ENCODE measurements at regions of chr9 and their contacts with region 1.

Region 1: DNA sequence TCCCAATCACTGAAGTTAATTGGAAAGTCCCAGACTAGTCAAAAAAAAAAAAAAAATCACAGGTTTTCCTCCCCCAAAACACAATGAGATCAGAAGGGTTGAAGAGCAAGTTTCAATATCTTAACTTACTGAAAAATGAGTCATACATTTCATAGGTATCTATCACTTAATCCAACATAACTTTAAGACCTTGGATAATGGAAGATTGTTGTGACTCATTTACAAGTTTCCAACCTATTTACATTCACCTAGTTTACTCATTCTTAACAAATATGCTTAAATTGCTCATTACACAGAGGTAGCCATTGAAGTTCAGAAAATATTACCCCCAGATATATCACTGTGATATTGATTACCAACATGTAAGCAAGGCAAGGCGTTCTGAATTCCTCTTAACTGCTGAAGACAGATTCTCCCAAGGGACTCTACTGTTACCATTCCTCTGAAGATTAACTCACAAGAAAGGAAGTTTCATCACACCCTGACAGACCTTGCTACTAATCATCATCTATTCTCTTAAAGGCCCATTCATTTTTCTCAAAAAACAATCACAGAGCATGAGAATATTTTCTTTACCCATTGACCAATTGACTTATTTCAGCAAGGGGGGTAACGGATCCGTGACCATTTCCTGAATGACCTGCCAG is 563.8 kb downstream of the TLE1 start:
- DNase-seq: peak; percentile 87
- ATAC-seq: peak; percentile 94
- H3K4me3 ChIP-seq: peak overlapping the region; percentile 9; the same call in 1 of the 2 replicates
- H3K27ac ChIP-seq: peak overlapping the region; percentile 90
- H3K4me1 ChIP-seq: peaks cover 24% of the 10 kb centered on the region
- H3K27me3 ChIP-seq: no peaks in the 10 kb centered on the region
- CTCF ChIP-seq: no peak

Region 2: GRCh38 chr9:80957801-80958200 is 167.8 kb before region 1 on chr9:
- CTCF ChIA-PET with region 1: no interaction called
- POLR2A ChIA-PET with region 1: no interaction called
- intact Hi-C with region 1: no loop called
- DNase-seq: no peak
- ATAC-seq: no peak
- H3K4me3 ChIP-seq: no peak overlapping the region
- H3K27ac ChIP-seq: no peak overlapping the region
- H3K4me1 ChIP-seq: no peaks in the 10 kb centered on the region
- H3K27me3 ChIP-seq: no peaks in the 10 kb centered on the region
- CTCF ChIP-seq: no peak

Region 3: GRCh38 chr9:81146656-81147337 is 21.2 kb after region 1 on chr9:
- CTCF ChIA-PET with region 1: no interaction called
- POLR2A ChIA-PET with region 1: no interaction called
- intact Hi-C with region 1: loop called (anchors 1 kb)
- DNase-seq: peak; percentile 85
- ATAC-seq: peak; percentile 88
- H3K4me3 ChIP-seq: 0 out of 2 replicates have a peak overlapping the region, but pooled peaks have one; percentile 12
- H3K27ac ChIP-seq: peak overlapping the region; percentile 82
- H3K4me1 ChIP-seq: peaks cover 40% of the 10 kb centered on the region
- H3K27me3 ChIP-seq: no peaks in the 10 kb centered on the region
- CTCF ChIP-seq: no peak

Region 4: GRCh38 chr9:81410197-81410596 is 284.6 kb after region 1 on chr9:
- CTCF ChIA-PET with region 1: no interaction called
- POLR2A ChIA-PET with region 1: no interaction called
- intact Hi-C with region 1: loop called (anchors 10 kb)
- DNase-seq: peak; percentile 90
- ATAC-seq: peak; percentile 67
- H3K4me3 ChIP-seq: peak overlapping the region; percentile 26; the same call in 1 of the 2 replicates
- H3K27ac ChIP-seq: peak overlapping the region; percentile 82
- H3K4me1 ChIP-seq: peaks cover 52% of the 10 kb centered on the region
- H3K27me3 ChIP-seq: no peaks in the 10 kb centered on the region
- CTCF ChIP-seq: no peak

Region 5: DNA sequence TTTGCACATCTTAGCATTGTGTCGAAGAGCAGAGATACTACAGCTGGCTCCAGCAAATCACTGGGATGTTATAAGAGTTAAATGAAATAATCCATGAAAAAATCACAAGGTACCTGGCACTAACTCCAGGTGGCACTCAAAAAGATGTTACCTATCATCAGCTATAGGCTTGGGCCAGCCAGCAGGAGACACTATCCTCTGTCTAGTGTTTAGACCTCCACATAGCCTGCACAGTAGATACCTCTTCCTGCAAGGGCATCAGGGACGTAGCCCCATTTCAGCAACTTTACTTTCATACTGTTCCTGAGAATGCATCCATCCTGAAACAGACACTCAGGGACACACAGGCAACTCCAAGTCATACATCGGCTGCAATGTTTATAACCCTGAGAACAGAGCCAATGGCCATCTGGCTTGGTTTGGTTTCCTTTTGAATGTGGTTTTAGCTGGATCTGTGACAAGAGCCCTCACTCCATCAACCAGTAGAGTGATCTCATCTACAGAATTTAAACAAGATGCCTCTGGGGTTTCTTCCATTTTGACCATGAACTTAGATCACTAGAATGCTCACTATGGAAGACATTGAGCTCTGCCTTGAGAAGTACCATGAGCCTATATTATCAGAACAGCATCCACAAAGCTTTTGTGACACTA is 493.9 kb after region 1 on chr9:
- CTCF ChIA-PET with region 1: no interaction called
- POLR2A ChIA-PET with region 1: no interaction called
- intact Hi-C with region 1: loop called (anchors 10 kb)
- DNase-seq: no peak
- ATAC-seq: no peak
- H3K4me3 ChIP-seq: no peak overlapping the region
- H3K27ac ChIP-seq: no peak overlapping the region
- H3K4me1 ChIP-seq: no peaks in the 10 kb centered on the region
- H3K27me3 ChIP-seq: no peaks in the 10 kb centered on the region
- CTCF ChIP-seq: 0 out of 2 replicates have a peak, but pooled peaks have one; percentile 15